ENCODE measurements at regions of chr15 and their contacts with region 1.

Region 1: DNA sequence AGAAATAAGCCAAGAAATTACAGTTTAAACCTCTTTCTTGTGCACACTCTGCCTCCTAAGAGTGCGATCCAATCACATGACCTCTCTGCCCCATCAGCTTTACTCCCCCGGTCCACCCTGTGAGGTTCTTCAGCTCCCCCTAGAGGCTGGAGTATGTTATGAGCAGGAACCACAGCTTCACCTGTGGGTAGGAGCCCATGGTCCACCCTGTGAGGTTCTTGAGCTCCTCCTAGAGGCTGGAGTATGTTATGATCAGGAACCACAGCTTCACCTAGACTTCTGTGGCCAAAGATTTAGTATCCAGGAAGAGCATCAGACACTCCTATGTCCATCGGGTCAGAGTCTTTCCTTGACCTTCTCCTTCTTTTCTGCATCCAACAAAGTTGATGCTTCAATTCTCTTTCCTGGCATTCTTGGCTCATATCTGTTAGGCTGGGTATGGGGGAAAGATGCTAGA is 163.9 kb downstream of the MINAR1 start:
- DNase-seq: peak; percentile 58 to 73
- H3K4me3 ChIP-seq: no peak overlapping the region
- H3K27ac ChIP-seq: no peak overlapping the region
- H3K4me1 ChIP-seq: no peaks in the 10 kb centered on the region
- H3K27me3 ChIP-seq: peaks cover 0 to under 1% (median 0%) of the 10 kb centered on the region in 4 experiments; a peak in 2 of 7 replicates
- CTCF ChIP-seq: peak; percentile 88 to 100 (median 100)
- EP300 ChIP-seq: no peak
- POLR2A ChIP-seq: no peak
- RAD21 ChIP-seq: peak; percentile 99 to 100

Region 2: GRCh38 chr15:79364571-79365240 is 231.4 kb before region 1 on chr15:
- CTCF ChIA-PET with region 1: interaction called, 28 read pairs
- POLR2A ChIA-PET with region 1: no interaction called
- DNase-seq: no peak
- H3K4me3 ChIP-seq: no peak overlapping the region
- H3K27ac ChIP-seq: no peak overlapping the region
- H3K4me1 ChIP-seq: peaks cover 0 to 7% (median 3%) of the 10 kb centered on the region in 4 experiments; a peak in 5 of 7 replicates
- H3K27me3 ChIP-seq: no peaks in the 10 kb centered on the region; a peak in 1 of 7 replicates
- CTCF ChIP-seq: peak; percentile 36 to 58 (median 52); a peak in 3 of 4 replicates
- EP300 ChIP-seq: no peak
- POLR2A ChIP-seq: no peak
- RAD21 ChIP-seq: peak; percentile 19 to 32; a peak in 2 of 4 replicates

Region 3: GRCh38 chr15:79450648-79451047 is 145.4 kb before region 1 on chr15:
- CTCF ChIA-PET with region 1: interaction called, 129 read pairs
- POLR2A ChIA-PET with region 1: no interaction called
- DNase-seq: no peak
- H3K4me3 ChIP-seq: no peak overlapping the region
- H3K27ac ChIP-seq: no peak overlapping the region
- H3K4me1 ChIP-seq: peaks cover 0 to 10% (median 6%) of the 10 kb centered on the region in 4 experiments; a peak in 5 of 7 replicates
- H3K27me3 ChIP-seq: no peaks in the 10 kb centered on the region; a peak in 1 of 7 replicates
- CTCF ChIP-seq: peak in 2 of 3 experiments; percentile 37 to 47; a peak in 2 of 4 replicates
- EP300 ChIP-seq: no peak
- POLR2A ChIP-seq: no peak
- RAD21 ChIP-seq: peak; percentile 61

Region 4: GRCh38 chr15:79582650-79583049 is 13.4 kb before region 1 on chr15:
- CTCF ChIA-PET with region 1: interaction called, 35 read pairs
- POLR2A ChIA-PET with region 1: no interaction called
- DNase-seq: no peak
- H3K4me3 ChIP-seq: no peak overlapping the region
- H3K27ac ChIP-seq: no peak overlapping the region
- H3K4me1 ChIP-seq: no peaks in the 10 kb centered on the region
- H3K27me3 ChIP-seq: no peaks in the 10 kb centered on the region
- CTCF ChIP-seq: no peak
- EP300 ChIP-seq: no peak
- POLR2A ChIP-seq: no peak
- RAD21 ChIP-seq: no peak

Region 5: GRCh38 chr15:79615754-79616153 is 19.7 kb after region 1 on chr15:
- CTCF ChIA-PET with region 1: interaction called, 11 read pairs
- POLR2A ChIA-PET with region 1: no interaction called
- DNase-seq: peak in 1 of 2 experiments; percentile 7
- H3K4me3 ChIP-seq: no peak overlapping the region
- H3K27ac ChIP-seq: no peak overlapping the region
- H3K4me1 ChIP-seq: no peaks in the 10 kb centered on the region
- H3K27me3 ChIP-seq: no peaks in the 10 kb centered on the region
- CTCF ChIP-seq: no peak
- EP300 ChIP-seq: no peak
- POLR2A ChIP-seq: no peak
- RAD21 ChIP-seq: no peak